ENCODE measurements at regions of chr19 and their contacts with region 1.

Region 1: GRCh38 chr19:14339741-14340140 is 41.5 kb upstream of the ADGRE5 start:
- DNase-seq: no peak
- ATAC-seq: no peak
- H3K4me3 ChIP-seq: no peak overlapping the region
- H3K4me3 Mint-ChIP-seq: no peak overlapping the region
- H3K27ac ChIP-seq: no peak overlapping the region
- H3K27ac Mint-ChIP-seq: no peak overlapping the region
- H3K4me1 ChIP-seq: no peaks in the 10 kb centered on the region
- H3K4me1 Mint-ChIP-seq: peaks cover under 1 to 4% (median 1%) of the 10 kb centered on the region in 3 donors
- H3K27me3 ChIP-seq: no peaks in the 10 kb centered on the region
- H3K27me3 Mint-ChIP-seq: no peaks in the 10 kb centered on the region

Region 2: DNA sequence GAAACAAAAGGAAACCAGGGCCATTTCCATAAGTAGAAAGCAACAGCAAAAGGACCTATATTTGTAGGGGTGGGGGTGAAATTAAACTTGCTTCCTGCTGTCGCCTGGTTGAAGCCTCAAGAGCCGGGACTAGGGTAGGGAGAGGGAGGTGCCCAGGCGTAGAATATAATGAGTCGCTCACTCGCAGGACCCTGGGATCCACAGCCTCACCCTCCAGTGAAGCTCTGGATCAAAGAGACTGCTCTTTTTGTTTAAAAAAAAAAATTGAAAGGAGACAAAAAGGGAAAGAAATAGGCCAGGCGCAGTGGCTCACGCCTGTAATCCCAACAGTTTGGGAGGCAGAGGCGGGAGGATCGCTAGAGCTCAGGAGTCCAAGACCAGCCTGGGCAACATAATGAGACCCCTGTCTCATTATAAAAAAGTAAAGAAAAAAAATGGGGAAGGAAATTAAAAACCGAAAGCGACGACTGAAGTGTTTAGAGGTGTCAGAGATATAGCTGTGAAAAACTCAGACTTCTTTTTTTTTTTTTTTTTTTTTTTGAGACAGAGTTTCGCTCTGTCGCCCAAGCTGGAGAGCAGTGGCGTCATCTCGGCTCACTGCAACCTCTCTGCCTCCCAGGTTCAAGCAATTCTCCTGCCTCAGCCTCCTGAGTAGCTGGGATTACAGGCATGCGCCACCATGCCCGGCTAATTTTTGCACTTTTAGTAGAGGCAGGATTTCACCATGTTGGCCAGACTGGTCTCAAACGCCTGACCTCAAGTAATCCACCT is 30.6 kb after region 1 on chr19:
- CTCF ChIA-PET with region 1: no interaction called
- POLR2A ChIA-PET with region 1: no interaction called
- DNase-seq: peak in 32 of 35 experiments; percentile 50 to 83 (median 62)
- ATAC-seq: peak in 3 of 4 experiments; percentile 9 to 32 (median 15)
- H3K4me3 ChIP-seq: peak overlapping the region; percentile 30 to 49
- H3K4me3 Mint-ChIP-seq: peak overlapping the region; percentile 79 to 85 (median 84)
- H3K27ac ChIP-seq: peak overlapping the region; percentile 100
- H3K27ac Mint-ChIP-seq: peak overlapping the region; percentile 90 to 99
- H3K4me1 ChIP-seq: peaks cover 45 to 97% of the 10 kb centered on the region in 2 experiments
- H3K4me1 Mint-ChIP-seq: peaks cover 75 to 79% (median 78%) of the 10 kb centered on the region in 3 donors
- H3K27me3 ChIP-seq: no peaks in the 10 kb centered on the region
- H3K27me3 Mint-ChIP-seq: no peaks in the 10 kb centered on the region

Region 3: DNA sequence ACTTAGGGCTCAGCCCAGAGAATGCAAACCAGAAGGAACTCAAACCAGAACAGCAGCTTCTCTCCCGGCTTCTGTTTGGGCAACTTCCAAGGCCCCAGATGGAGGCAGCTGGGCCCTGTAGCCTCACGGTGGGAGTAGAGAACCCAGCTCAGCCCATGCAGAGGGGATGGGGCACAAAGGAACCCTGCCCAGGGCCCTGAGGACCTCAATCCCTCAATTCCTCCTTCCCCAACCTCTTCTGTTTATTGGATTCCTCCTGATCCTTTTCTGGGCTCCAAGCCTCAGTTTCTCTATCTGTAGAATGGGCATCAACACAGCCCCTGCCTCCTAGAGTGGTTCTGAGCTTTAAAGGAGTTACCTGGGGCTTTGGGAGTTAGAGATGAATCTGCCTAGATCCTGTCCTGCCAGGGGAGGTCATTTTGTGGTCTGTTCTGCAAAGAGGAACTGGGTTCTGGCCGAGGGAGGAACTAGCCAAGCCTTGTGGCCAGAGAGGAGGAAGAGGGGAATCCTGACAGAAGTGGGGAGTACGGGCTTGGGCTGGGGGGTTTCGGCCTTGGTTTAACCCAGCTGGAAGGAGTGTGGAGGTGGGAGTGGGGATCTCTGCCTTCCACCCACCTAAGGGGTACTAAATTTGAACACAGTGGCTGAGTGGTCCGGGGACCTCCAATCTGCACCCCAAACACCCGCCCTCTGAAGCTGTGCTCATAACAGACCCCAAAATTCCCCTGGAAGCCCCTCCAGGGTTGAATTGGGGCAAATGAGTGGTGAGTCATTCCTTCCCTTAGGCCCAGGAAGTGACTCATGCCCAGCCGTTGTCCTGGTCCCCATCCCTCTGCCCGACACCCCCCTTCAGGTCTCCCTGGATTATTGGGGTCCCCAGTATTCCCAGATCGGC is 44.2 kb after region 1 on chr19:
- CTCF ChIA-PET with region 1: interaction called in 1 of 2 experiments, 3 read pairs
- POLR2A ChIA-PET with region 1: interaction called in 1 of 2 experiments, 13 read pairs
- DNase-seq: peak in 4 of 35 experiments; percentile 32 to 77 (median 52)
- ATAC-seq: peak in 3 of 4 experiments; percentile 7 to 22 (median 12)
- H3K4me3 ChIP-seq: peak overlapping the region; percentile 83 to 88
- H3K4me3 Mint-ChIP-seq: peak overlapping the region; percentile 86 to 94 (median 87)
- H3K27ac ChIP-seq: peak overlapping the region; percentile 99
- H3K27ac Mint-ChIP-seq: peak overlapping the region; percentile 96 to 97
- H3K4me1 ChIP-seq: peaks cover 19 to 81% of the 10 kb centered on the region in 2 experiments
- H3K4me1 Mint-ChIP-seq: peaks cover 44 to 57% (median 49%) of the 10 kb centered on the region in 3 donors
- H3K27me3 ChIP-seq: no peaks in the 10 kb centered on the region
- H3K27me3 Mint-ChIP-seq: no peaks in the 10 kb centered on the region

Region 4: DNA sequence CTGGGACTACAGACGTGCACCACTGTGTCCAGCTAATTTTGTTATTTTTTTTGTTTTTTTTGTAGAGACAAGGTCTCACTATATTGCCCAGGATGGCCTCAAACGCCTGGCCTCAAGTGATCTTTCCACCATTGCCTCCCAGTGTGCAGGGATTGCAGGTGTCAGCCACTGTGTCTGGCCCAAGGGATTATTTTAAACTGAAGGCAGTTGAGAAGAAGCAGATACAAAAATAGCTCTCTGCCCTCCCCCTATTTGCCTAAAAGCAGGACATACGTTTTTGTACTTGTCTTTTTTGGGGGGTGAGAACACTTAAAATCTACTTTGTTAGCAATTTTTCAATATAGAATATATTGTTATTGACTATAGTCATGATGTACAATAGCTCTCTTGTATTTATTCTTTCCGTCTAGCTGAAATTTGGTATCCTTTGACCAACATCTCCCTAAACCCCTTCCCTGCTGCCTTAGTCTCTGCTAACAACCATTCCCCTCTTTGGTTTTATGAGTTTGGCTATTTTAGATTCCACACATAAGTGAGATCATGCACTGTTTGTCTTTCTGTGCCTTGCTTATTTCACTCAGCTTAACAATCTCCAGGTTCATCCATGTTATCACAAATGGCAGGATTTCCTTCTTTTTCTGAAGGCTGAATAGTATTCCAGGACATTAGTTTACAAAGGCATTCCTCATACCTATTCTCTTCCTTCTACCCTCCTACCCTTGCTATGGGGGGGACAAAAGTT is 300.0 kb after region 1 on chr19:
- CTCF ChIA-PET with region 1: no interaction called
- POLR2A ChIA-PET with region 1: no interaction called
- DNase-seq: no peak
- ATAC-seq: no peak
- H3K4me3 ChIP-seq: no peak overlapping the region
- H3K4me3 Mint-ChIP-seq: no peak overlapping the region
- H3K27ac ChIP-seq: no peak overlapping the region
- H3K27ac Mint-ChIP-seq: no peak overlapping the region
- H3K4me1 ChIP-seq: no peaks in the 10 kb centered on the region
- H3K4me1 Mint-ChIP-seq: no peaks in the 10 kb centered on the region
- H3K27me3 ChIP-seq: peaks cover 0 to 18% of the 10 kb centered on the region in 2 experiments
- H3K27me3 Mint-ChIP-seq: peaks cover 13% of the 10 kb centered on the region in 2 donors

Measured in T-cell (primary cell).